ENCODE measurements at regions of chr15 and their contacts with region 1.

Region 1: DNA sequence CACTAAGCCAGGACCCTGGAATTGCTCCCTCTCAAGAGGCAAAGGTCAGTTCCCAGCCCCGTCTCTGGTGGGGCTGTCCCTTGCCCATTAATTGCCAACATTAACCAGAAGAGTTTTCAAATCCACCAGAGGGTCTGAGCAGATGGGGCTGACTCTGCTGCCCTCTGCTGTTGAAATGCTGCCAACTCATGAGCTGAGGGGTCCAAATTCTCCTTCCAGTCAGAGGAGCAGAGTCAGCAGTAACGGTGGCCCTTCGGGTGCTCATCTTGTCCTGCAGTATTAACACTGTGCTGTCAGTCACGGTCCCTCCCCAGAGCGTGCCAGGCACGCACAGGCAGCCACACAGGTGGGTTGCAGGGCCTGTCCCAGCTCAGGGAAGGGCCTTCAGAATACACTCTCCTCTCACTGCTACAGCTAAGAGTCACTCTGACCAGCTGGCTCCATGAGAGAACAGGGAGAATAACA is 10.7 kb upstream of the SPTBN5 start:
- DNase-seq: peak; percentile 70 to 81 (median 73)
- ATAC-seq: peak; percentile 98
- H3K4me3 ChIP-seq: no peak overlapping the region
- H3K27ac ChIP-seq: no peak overlapping the region
- H3K4me1 ChIP-seq: peaks cover 0 to 4% of the 10 kb centered on the region in 2 experiments; a peak in 1 of 5 replicates
- H3K27me3 ChIP-seq: no peaks in the 10 kb centered on the region
- CTCF ChIP-seq: peak; percentile 89 to 91 (median 89)
- EP300 ChIP-seq: no peak
- POLR2A ChIP-seq: no peak
- RAD21 ChIP-seq: peak; percentile 61 to 88

Region 2: GRCh38 chr15:41465822-41466421 is 438.7 kb before region 1 on chr15:
- CTCF ChIA-PET with region 1: interaction called, 9 read pairs
- POLR2A ChIA-PET with region 1: no interaction called
- in situ Hi-C with region 1: no loop called
- intact Hi-C with region 1: loop called (anchors 5 kb)
- DNase-seq: peak; percentile 39 to 69 (median 48)
- ATAC-seq: peak; percentile 89
- H3K4me3 ChIP-seq: no peak overlapping the region
- H3K27ac ChIP-seq: no peak overlapping the region
- H3K4me1 ChIP-seq: no peaks in the 10 kb centered on the region
- H3K27me3 ChIP-seq: no peaks in the 10 kb centered on the region
- CTCF ChIP-seq: peak; percentile 72 to 98 (median 92)
- EP300 ChIP-seq: no peak
- POLR2A ChIP-seq: no peak
- RAD21 ChIP-seq: peak; percentile 90 to 97

Region 3: DNA sequence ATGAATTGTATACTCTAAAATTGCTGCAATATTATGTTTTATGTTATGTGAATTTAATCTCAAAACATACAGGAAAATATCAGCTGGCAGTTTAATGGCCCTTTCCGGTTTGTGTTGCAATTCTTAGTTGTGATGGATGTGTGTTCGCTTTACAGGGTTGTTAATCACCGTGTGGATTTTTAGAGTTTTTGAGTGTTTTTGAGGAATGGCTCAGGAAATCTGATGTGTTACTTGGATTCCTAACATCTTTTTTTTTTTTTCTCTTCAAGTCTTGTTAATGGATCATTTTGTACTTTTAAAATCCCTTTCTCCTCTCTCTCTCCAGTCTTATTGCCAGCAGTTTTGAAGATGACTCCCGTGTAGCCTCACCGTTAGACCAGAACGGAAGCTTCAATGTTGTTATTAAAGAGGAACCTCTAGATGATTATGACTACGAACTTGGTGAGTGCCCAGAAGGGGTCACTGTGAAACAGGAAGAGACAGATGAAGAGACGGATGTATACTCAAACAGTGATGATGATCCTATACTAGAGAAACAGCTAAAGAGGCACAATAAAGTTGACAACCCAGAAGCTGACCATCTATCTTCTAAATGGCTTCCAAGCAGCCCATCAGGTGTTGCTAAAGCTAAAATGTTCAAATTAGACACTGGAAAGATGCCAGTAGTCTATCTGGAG is 208.7 kb before region 1 on chr15:
- CTCF ChIA-PET with region 1: no interaction called
- POLR2A ChIA-PET with region 1: no interaction called
- in situ Hi-C with region 1: no loop called
- intact Hi-C with region 1: loop called (anchors 10 kb)
- DNase-seq: peak; percentile 18 to 55 (median 23)
- ATAC-seq: peak; percentile 91
- H3K4me3 ChIP-seq: no peak overlapping the region
- H3K27ac ChIP-seq: no peak overlapping the region
- H3K4me1 ChIP-seq: peaks cover 0 to 10% of the 10 kb centered on the region in 2 experiments; a peak in 2 of 5 replicates
- H3K27me3 ChIP-seq: no peaks in the 10 kb centered on the region
- CTCF ChIP-seq: peak; percentile 29 to 66 (median 65); a peak in 4 of 6 replicates
- EP300 ChIP-seq: no peak
- POLR2A ChIP-seq: no peak
- RAD21 ChIP-seq: peak; percentile 38 to 58

Region 4: DNA sequence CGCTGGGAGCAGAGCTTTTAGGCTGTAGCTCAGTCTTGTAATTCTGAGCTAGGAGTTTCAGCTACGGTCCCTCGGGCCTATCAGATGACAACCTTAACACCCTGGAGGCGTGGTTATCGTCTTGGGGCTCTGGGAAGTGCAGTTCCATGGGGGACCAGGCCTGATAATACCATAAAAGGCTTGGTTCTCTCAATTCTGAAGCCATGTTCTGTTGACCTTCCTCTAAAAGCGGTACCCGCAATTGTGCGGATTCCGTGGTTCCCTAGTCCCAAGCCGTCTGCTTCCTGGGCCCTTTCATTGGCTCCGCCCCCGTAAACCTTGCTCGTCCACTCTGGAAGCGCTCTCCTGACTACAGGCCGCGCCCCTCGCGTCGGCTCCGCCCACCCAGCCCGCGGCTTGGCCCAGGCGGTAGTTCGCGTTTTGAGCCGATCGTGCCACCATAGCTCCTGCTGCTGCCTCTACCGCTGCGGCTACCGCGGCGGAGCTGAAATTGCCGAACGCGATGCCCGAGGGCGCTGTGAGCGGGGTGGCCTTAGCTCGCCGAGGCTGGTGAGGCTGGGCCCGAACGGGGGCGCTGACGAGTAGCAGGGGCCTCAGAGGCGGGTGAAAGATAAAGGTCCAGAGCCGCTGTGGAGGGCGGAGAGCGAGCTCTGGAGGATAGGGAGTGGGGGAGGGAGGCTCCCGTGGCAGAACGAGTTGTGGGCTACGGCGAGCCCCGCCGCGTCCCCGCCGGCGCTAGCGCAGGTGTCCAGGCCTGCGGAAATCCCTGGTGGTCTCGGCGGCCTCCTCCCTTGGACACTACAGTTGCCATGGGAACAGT is 130.3 kb before region 1 on chr15 and contains the start of gene MAPKBP1:
- CTCF ChIA-PET with region 1: interaction called, 14 read pairs
- POLR2A ChIA-PET with region 1: interaction called, 10 read pairs
- in situ Hi-C with region 1: no loop called
- intact Hi-C with region 1: loop called (anchors 2 kb)
- DNase-seq: peak; percentile 95 to 98 (median 97)
- ATAC-seq: peak; percentile 96
- H3K4me3 ChIP-seq: peak within 1 kb of the TSS; percentile 54
- H3K27ac ChIP-seq: peak within 1 kb of the TSS; percentile 70
- H3K4me1 ChIP-seq: peaks cover 12 to 31% of the 10 kb centered on the region in 2 experiments
- H3K27me3 ChIP-seq: no peaks in the 10 kb centered on the region; a peak in 1 of 5 replicates
- CTCF ChIP-seq: peak; percentile 89 to 99 (median 99)
- EP300 ChIP-seq: 0 out of 2 replicates have a peak, but pooled peaks have one; percentile 4
- POLR2A ChIP-seq: peak; percentile 78; the same call in 1 of the 2 replicates
- RAD21 ChIP-seq: peak; percentile 60 to 78; a peak in 3 of 4 replicates
- polyA plus RNA-seq, gene MAPKBP1: 0.15 to 0.28 TPM

Region 5: DNA sequence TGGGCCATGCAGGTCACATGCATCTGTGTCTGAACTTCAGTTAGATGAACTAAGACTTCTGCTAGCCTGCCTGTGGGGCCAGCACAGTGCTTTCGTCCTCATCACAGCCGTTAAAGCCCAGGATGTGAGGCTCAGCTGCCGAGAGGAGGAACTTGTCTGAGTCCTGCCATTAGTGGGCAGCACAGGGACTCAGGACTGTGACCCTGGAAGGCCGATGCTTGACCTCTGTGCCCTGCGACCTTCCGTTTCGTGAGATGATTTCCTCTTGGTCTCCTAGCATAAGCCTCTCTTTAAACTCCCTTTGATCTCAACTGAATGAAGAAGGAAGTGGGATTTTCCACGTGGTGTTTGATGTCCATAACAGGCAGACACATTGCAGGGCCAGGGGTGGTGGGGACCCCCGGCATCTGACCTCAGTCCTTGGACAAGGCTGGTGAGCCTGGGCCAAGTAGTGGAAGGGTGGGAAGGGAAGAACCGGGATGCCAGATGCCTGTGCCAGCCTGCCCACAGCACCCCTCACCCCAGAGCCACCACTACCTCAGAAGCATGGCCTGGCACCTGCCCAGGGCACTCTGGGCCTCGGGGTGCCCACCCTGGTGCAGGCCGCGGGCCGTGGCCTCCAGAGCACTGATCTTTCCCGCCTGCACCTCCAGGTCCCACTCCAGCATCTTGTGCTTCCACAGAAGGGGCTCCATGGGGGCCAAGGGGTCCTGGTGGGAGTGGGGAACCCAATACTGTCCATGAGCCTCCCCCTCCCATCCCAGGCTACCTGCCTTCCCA is 44.3 kb before region 1 on chr15:
- CTCF ChIA-PET with region 1: no interaction called
- POLR2A ChIA-PET with region 1: no interaction called
- in situ Hi-C with region 1: no loop called
- intact Hi-C with region 1: no loop called
- DNase-seq: peak in 2 of 4 experiments; percentile 40 to 42
- ATAC-seq: peak; percentile 67
- H3K4me3 ChIP-seq: no peak overlapping the region
- H3K27ac ChIP-seq: no peak overlapping the region
- H3K4me1 ChIP-seq: peaks cover 0 to 46% of the 10 kb centered on the region in 2 experiments; a peak in 2 of 5 replicates
- H3K27me3 ChIP-seq: peaks cover 55 to 93% of the 10 kb centered on the region in 2 experiments
- CTCF ChIP-seq: peak; percentile 27 to 54 (median 45); a peak in 5 of 6 replicates
- EP300 ChIP-seq: no peak
- POLR2A ChIP-seq: no peak
- RAD21 ChIP-seq: peak in 1 of 2 experiments; percentile 30; a peak in 2 of 4 replicates

Region 6: DNA sequence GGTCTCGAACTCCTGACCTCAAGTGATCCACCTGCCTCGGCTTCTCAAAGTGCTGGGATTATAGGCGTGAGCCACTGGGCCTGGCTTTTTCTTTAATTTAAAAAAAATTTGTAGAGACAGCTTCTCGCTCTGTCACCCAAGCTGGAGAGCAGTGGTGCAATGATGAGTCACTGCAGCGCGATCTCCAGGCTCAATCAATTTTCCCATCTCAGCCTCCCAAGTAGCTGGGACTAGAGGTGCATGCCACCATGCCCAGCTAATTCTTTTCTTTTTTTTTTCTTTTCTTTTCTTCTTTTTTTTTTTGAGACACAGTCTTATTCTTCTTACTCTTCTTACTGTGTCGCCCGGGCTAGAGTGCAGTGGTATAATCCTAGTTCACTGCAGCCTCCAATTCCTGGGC is 1486.2 kb after region 1 on chr15:
- CTCF ChIA-PET with region 1: no interaction called
- POLR2A ChIA-PET with region 1: no interaction called
- in situ Hi-C with region 1: no loop called
- intact Hi-C with region 1: no loop called
- DNase-seq: peak in 1 of 4 experiments; percentile 36
- ATAC-seq: peak; percentile 70
- H3K4me3 ChIP-seq: no peak overlapping the region
- H3K27ac ChIP-seq: no peak overlapping the region
- H3K4me1 ChIP-seq: no peaks in the 10 kb centered on the region
- H3K27me3 ChIP-seq: no peaks in the 10 kb centered on the region
- CTCF ChIP-seq: no peak
- EP300 ChIP-seq: no peak
- POLR2A ChIP-seq: no peak
- RAD21 ChIP-seq: no peak